ENCODE measurements at regions of chr12 and their contacts with region 1.

Region 1: DNA sequence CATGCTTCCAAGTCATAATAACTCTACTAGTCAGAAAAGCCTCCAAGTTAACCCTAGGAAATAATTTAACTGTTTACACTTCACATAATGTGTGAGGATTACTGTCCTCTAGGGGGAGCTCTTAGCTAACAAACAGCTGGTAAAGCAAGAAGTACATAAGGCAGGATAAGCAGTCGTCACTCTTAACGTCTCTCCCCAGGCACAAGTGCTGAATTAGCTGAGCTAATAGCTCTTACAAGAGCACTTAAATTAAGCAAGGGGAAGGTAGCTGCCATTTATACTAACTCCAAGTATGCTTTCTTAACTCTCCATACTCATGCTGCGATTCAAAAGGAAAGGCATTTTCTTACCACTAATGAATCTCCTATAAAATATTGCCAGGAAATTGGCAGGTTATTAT is 79.3 kb upstream of the TSPAN11 start:
- DNase-seq: peak in 2 of 9 experiments; percentile 65 to 71
- ATAC-seq: no peak
- H3K4me3 ChIP-seq: no peak overlapping the region
- H3K4me3 Mint-ChIP-seq: no peak overlapping the region
- H3K27ac ChIP-seq: no peak overlapping the region
- H3K27ac Mint-ChIP-seq: no peak overlapping the region
- H3K4me1 ChIP-seq: no peaks in the 10 kb centered on the region
- H3K4me1 Mint-ChIP-seq: peaks cover 10% of the 10 kb centered on the region
- H3K27me3 ChIP-seq: no peaks in the 10 kb centered on the region
- H3K27me3 Mint-ChIP-seq: no peaks in the 10 kb centered on the region
- CTCF ChIP-seq: peak; percentile 56

Region 2: DNA sequence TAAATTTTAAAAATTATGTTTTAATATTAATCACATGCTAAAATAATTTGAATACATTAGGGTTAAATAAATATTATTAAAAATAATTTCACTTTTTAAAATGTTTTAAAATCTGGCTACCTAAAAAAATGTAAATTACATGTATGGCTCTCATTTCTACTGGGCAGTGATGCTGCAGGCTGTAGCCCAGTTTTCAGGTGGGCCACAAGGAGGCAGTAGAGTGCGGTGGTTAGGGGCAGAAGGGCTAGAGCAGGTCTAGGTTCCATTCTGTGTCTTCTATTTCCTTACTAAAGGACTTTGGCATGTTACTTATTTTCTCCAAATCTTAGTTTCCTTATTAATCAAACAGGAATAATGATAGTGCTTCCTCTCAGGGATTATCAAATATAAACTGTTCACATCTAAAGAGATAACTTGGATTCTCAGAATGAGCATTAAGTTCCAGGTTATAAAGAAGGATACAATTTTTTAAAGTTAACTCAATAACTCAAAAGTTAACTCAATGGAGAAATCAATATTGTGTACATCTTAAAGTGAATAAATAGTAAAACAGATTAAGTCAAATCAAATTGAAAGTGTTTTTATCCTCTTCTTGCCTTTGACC is 1294.8 kb before region 1 on chr12:
- CTCF ChIA-PET with region 1: interaction called, 3 read pairs
- POLR2A ChIA-PET with region 1: no interaction called
- intact Hi-C with region 1: loop called in 1 of 2 experiments (anchors 1 kb)
- DNase-seq: peak; percentile 7 to 63 (median 61)
- ATAC-seq: peak; percentile 63
- H3K4me3 ChIP-seq: no peak overlapping the region
- H3K4me3 Mint-ChIP-seq: no peak overlapping the region
- H3K27ac ChIP-seq: no peak overlapping the region
- H3K27ac Mint-ChIP-seq: no peak overlapping the region
- H3K4me1 ChIP-seq: no peaks in the 10 kb centered on the region
- H3K4me1 Mint-ChIP-seq: no peaks in the 10 kb centered on the region
- H3K27me3 ChIP-seq: no peaks in the 10 kb centered on the region
- H3K27me3 Mint-ChIP-seq: peaks cover 3% of the 10 kb centered on the region
- CTCF ChIP-seq: peak; percentile 81

Region 3: GRCh38 chr12:30754709-30755394 is 92.4 kb before region 1 on chr12 and contains the start of gene CAPRIN2:
- CTCF ChIA-PET with region 1: interaction called, 5 read pairs
- POLR2A ChIA-PET with region 1: no interaction called
- intact Hi-C with region 1: loop called (anchors 2 to 5 kb)
- DNase-seq: peak; percentile 89 to 98 (median 93)
- ATAC-seq: peak; percentile 90
- H3K4me3 ChIP-seq: peak within 1 kb of the TSS; percentile 69 to 74
- H3K4me3 Mint-ChIP-seq: peak within 1 kb of the TSS; percentile 92
- H3K27ac ChIP-seq: peak within 1 kb of the TSS; percentile 66 to 69
- H3K27ac Mint-ChIP-seq: peak within 1 kb of the TSS; percentile 86
- H3K4me1 ChIP-seq: peaks cover 19% of the 10 kb centered on the region
- H3K4me1 Mint-ChIP-seq: peaks cover 44% of the 10 kb centered on the region
- H3K27me3 ChIP-seq: no peaks in the 10 kb centered on the region
- H3K27me3 Mint-ChIP-seq: no peaks in the 10 kb centered on the region
- CTCF ChIP-seq: no peak
- total RNA-seq, gene CAPRIN2: 16.2 to 17.4 TPM

Region 4: DNA sequence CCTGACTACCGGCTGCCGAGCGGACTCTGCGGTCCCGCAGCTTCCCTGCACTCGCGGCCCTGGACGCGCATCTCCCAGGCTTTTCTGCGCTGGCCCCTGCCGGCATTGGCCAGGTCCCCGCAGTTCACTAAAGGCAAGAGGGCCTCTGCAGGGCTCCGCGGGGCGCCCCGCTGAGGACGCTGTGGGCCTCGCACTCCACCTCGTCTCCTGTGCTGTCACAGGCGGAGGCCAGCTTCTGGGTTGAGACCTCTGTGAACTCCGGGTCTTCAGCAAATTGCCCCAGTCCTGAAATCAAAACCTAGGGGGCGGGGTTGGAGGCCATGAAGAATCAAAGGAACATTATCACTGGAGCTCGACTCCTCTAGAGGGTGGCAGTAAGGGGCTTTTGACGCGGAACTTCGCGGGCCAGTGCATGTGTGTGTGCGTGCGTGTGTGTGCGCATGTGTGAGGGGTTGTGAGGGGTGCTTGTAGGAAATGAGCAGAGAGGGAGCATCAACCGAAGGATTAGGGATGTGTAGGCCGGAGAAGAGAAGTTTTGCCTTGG is 24.0 kb before region 1 on chr12:
- CTCF ChIA-PET with region 1: interaction called, 11 read pairs
- POLR2A ChIA-PET with region 1: no interaction called
- intact Hi-C with region 1: no loop called
- DNase-seq: peak in 7 of 9 experiments; percentile 9 to 62 (median 37)
- ATAC-seq: peak; percentile 79
- H3K4me3 ChIP-seq: peak overlapping the region; percentile 48 to 64
- H3K4me3 Mint-ChIP-seq: peak overlapping the region; percentile 91
- H3K27ac ChIP-seq: no peak overlapping the region
- H3K27ac Mint-ChIP-seq: no peak overlapping the region
- H3K4me1 ChIP-seq: peaks cover 5% of the 10 kb centered on the region
- H3K4me1 Mint-ChIP-seq: peaks cover 18% of the 10 kb centered on the region
- H3K27me3 ChIP-seq: no peaks in the 10 kb centered on the region
- H3K27me3 Mint-ChIP-seq: peaks cover 56% of the 10 kb centered on the region
- CTCF ChIP-seq: no peak

Region 5: GRCh38 chr12:30870491-30871265 is 23.4 kb after region 1 on chr12:
- CTCF ChIA-PET with region 1: no interaction called
- POLR2A ChIA-PET with region 1: no interaction called
- intact Hi-C with region 1: no loop called
- DNase-seq: no peak
- ATAC-seq: no peak
- H3K4me3 ChIP-seq: no peak overlapping the region
- H3K4me3 Mint-ChIP-seq: no peak overlapping the region
- H3K27ac ChIP-seq: no peak overlapping the region
- H3K27ac Mint-ChIP-seq: no peak overlapping the region
- H3K4me1 ChIP-seq: no peaks in the 10 kb centered on the region
- H3K4me1 Mint-ChIP-seq: peaks cover 6% of the 10 kb centered on the region
- H3K27me3 ChIP-seq: no peaks in the 10 kb centered on the region
- H3K27me3 Mint-ChIP-seq: peaks cover 9% of the 10 kb centered on the region
- CTCF ChIP-seq: no peak

Region 6: GRCh38 chr12:31274520-31275300 is 427.5 kb after region 1 on chr12:
- CTCF ChIA-PET with region 1: interaction called, 19 read pairs
- POLR2A ChIA-PET with region 1: no interaction called
- intact Hi-C with region 1: loop called (anchors 1 to 2 kb)
- DNase-seq: no peak
- ATAC-seq: no peak
- H3K4me3 ChIP-seq: no peak overlapping the region
- H3K4me3 Mint-ChIP-seq: no peak overlapping the region
- H3K27ac ChIP-seq: no peak overlapping the region
- H3K27ac Mint-ChIP-seq: peak overlapping the region; percentile 20
- H3K4me1 ChIP-seq: no peaks in the 10 kb centered on the region
- H3K4me1 Mint-ChIP-seq: peaks cover 3% of the 10 kb centered on the region
- H3K27me3 ChIP-seq: no peaks in the 10 kb centered on the region
- H3K27me3 Mint-ChIP-seq: no peaks in the 10 kb centered on the region
- CTCF ChIP-seq: no peak